Dendritic cell treated with granulocyte-macrophage colony-stimulating factor and Interleukin-4, amounts not matched to agents 40 ng/mL and 50 ng/mL, for 4 days (primary cell): ENCODE measurements at regions of chr4 and their contacts with region 1.

Region 1: DNA sequence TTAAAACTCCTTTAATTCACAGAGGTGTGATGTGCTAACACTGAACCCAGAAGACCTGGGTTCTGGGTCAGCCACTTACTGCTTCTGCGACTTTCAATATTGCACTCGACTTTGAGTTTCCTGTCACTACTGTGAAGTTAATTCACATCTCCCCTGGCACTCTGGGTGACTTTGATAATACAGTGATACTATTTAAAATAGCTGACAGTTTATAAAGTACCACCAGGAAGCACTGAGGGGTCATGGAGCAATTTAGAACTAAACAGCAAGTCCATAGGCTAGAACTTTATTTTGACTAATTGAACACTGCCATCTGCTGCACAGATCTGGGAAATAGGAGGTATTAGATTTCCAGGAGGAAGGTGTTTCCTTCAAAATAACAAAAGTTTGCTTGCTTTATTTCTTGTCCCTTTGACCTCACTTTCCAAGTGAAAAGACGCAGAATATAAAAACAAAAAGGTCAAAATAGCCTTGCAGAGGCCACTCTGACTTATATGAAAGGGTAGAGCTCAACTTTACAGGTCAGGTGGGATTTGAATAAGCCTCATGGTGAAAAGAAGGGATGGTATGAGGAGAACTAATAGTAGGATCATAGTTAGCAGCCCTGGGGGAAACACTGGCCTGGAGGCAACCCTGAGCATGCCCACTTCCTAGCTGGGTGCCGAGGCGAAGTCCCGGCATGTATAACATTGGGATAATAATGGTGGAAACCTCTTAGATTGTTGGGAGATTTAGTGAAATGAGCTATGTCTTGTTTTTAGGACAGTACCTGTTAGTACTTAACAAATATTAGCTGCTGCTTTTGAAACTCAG is 53.4 kb downstream of the ZNF518B start:
- H3K4me3 Mint-ChIP-seq: no peak overlapping the region
- H3K27ac Mint-ChIP-seq: no peak overlapping the region
- H3K4me1 Mint-ChIP-seq: no peaks in the 10 kb centered on the region
- H3K27me3 Mint-ChIP-seq: no peaks in the 10 kb centered on the region

Region 2: DNA sequence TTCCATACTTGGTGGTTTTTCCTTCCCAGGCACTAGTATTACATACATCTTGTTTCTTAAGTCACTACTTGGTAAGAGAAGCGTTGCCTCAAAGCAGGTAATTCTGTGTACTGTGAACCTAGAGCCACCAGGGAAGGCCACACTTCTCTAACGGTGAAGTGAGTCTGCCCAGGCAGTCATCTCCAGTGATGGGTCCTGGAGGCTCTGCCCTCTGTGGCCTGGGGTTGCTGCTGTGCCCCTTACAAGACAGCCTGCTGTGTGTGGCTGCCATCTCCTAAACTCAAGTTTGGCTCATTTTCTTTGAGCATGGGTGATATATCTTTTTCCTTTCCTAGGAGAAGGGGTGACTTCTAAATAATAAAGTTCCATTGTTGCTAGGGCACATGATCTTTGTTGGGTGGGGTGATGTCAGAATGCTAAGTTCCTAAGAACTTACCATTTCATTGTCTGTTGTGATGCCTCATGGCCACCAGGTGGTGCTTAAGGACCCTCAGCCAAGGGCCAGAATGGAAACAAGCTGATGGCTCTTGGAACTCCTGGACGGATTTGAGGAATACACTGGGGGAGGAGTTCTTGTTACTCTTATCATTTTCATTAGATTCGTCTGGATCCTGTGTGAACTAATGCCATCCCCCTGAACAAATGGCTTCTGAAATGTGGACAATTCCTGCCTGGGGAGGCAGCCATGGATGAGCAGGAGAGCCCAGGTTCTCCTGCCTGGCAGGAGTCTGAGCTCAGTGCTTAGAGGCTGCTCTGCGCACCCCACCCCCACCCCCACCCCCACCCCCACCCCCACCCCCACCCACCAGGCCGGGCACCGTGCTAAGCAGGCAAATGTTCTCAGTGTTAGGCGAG is 246.1 kb before region 1 on chr4:
- intact Hi-C with region 1: loop called (anchors 2 kb)
- H3K4me3 Mint-ChIP-seq: no peak overlapping the region
- H3K27ac Mint-ChIP-seq: no peak overlapping the region
- H3K4me1 Mint-ChIP-seq: no peaks in the 10 kb centered on the region
- H3K27me3 Mint-ChIP-seq: peaks cover 6% of the 10 kb centered on the region

Region 3: GRCh38 chr4:10164877-10165283 is 239.0 kb before region 1 on chr4:
- intact Hi-C with region 1: loop called (anchors 2 kb)
- H3K4me3 Mint-ChIP-seq: no peak overlapping the region
- H3K27ac Mint-ChIP-seq: no peak overlapping the region
- H3K4me1 Mint-ChIP-seq: no peaks in the 10 kb centered on the region
- H3K27me3 Mint-ChIP-seq: peaks cover 1% of the 10 kb centered on the region